MCF 10A (cell line): ENCODE measurements at regions of chr5 and their contacts with region 1.

Region 1: GRCh38 chr5:135246923-135247795 is 151.9 kb downstream of the MACROH2A1 start:
- DNase-seq: peak; percentile 98
- H3K4me3 Mint-ChIP-seq: peak overlapping the region; percentile 51
- H3K27ac Mint-ChIP-seq: peak overlapping the region; percentile 29
- H3K4me1 Mint-ChIP-seq: peaks cover 50% of the 10 kb centered on the region
- H3K27me3 Mint-ChIP-seq: no peaks in the 10 kb centered on the region
- CTCF ChIP-seq: no peak

Region 2: GRCh38 chr5:134225618-134226440 is 1021.3 kb before region 1 on chr5 and contains the start of gene PPP2CA:
- CTCF ChIA-PET with region 1: no interaction called
- POLR2A ChIA-PET with region 1: no interaction called
- intact Hi-C with region 1: no loop called
- DNase-seq: peak; percentile 99
- H3K4me3 Mint-ChIP-seq: peak within 1 kb of the TSS; percentile 97
- H3K27ac Mint-ChIP-seq: peak within 1 kb of the TSS; percentile 100
- H3K4me1 Mint-ChIP-seq: peaks cover 34% of the 10 kb centered on the region
- H3K27me3 Mint-ChIP-seq: no peaks in the 10 kb centered on the region
- CTCF ChIP-seq: no peak
- total RNA-seq, gene PPP2CA: 317 and 359 TPM in 2 replicates

Region 3: GRCh38 chr5:135230251-135230925 is 16.8 kb before region 1 on chr5:
- CTCF ChIA-PET with region 1: interaction called, 4 read pairs
- POLR2A ChIA-PET with region 1: interaction called, 23 read pairs
- intact Hi-C with region 1: no loop called
- DNase-seq: peak; percentile 92
- H3K4me3 Mint-ChIP-seq: no peak overlapping the region
- H3K27ac Mint-ChIP-seq: no peak overlapping the region
- H3K4me1 Mint-ChIP-seq: peaks cover 26% of the 10 kb centered on the region
- H3K27me3 Mint-ChIP-seq: no peaks in the 10 kb centered on the region
- CTCF ChIP-seq: no peak

Region 4: GRCh38 chr5:135236908-135237747 is 10.0 kb before region 1 on chr5:
- CTCF ChIA-PET with region 1: interaction called, 4 read pairs
- POLR2A ChIA-PET with region 1: interaction called, 23 read pairs
- intact Hi-C with region 1: no loop called
- DNase-seq: peak; percentile 45
- H3K4me3 Mint-ChIP-seq: no peak overlapping the region
- H3K27ac Mint-ChIP-seq: no peak overlapping the region
- H3K4me1 Mint-ChIP-seq: peaks cover 29% of the 10 kb centered on the region
- H3K27me3 Mint-ChIP-seq: no peaks in the 10 kb centered on the region
- CTCF ChIP-seq: no peak

Region 5: DNA sequence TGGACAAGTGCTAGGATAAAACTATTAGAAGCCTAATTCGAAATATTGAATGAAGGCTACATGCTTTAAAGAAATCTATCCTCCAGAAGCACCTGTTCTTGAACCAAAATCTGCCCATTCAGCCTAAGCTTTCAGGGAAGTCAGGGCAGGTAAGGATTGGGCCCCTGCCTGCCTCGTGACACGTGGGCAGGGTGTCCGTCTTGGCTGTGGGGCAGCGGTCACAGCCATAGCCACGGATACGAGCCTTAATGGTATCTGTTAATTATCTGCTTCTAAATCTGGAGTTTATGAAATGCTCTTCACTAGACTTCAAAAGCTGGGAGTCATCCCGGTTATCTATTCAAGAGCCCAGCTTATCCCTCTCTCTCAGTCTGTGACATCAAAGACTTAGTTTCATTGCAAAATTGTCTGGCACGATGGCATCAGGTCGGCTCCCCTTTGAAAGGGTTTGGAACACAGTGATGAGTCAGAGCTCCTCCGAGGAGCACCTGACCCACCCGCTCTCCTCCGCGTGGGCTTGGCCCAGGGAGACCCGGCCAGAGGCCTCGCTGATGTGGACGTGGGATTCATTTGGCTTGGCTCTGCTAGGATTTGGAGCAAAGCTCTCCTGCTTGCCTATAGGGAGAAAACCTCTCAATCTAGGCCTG is 16.0 kb after region 1 on chr5:
- CTCF ChIA-PET with region 1: interaction called, 5 read pairs
- POLR2A ChIA-PET with region 1: interaction called, 11 read pairs
- intact Hi-C with region 1: no loop called
- DNase-seq: peak; percentile 64
- H3K4me3 Mint-ChIP-seq: no peak overlapping the region
- H3K27ac Mint-ChIP-seq: no peak overlapping the region
- H3K4me1 Mint-ChIP-seq: no peaks in the 10 kb centered on the region
- H3K27me3 Mint-ChIP-seq: no peaks in the 10 kb centered on the region
- CTCF ChIP-seq: no peak